ENCODE measurements at regions of chr22 and their contacts with region 1.

Region 1: GRCh38 chr22:30356449-30357235 is at the starts of genes CCDC157 and SF3A1:
- DNase-seq: peak; percentile 67 to 85
- ATAC-seq: peak; percentile 94 to 97
- H3K4me3 ChIP-seq: peak within 1 kb of the TSS; percentile 93
- H3K27ac ChIP-seq: peak within 1 kb of the TSS; percentile 95 to 99
- H3K4me1 ChIP-seq: peaks cover 18% of the 10 kb centered on the region; the same call in 1 of the 3 replicates
- CTCF ChIP-seq: no peak
- EP300 ChIP-seq: no peak
- POLR2A ChIP-seq: peak; percentile 87
- RAD21 ChIP-seq: no peak
- polyA plus RNA-seq, gene CCDC157: 1.4 and 2.1 TPM in 2 replicates
- polyA plus RNA-seq, gene SF3A1: 47.0 and 86.1 TPM in 2 replicates

Region 2: DNA sequence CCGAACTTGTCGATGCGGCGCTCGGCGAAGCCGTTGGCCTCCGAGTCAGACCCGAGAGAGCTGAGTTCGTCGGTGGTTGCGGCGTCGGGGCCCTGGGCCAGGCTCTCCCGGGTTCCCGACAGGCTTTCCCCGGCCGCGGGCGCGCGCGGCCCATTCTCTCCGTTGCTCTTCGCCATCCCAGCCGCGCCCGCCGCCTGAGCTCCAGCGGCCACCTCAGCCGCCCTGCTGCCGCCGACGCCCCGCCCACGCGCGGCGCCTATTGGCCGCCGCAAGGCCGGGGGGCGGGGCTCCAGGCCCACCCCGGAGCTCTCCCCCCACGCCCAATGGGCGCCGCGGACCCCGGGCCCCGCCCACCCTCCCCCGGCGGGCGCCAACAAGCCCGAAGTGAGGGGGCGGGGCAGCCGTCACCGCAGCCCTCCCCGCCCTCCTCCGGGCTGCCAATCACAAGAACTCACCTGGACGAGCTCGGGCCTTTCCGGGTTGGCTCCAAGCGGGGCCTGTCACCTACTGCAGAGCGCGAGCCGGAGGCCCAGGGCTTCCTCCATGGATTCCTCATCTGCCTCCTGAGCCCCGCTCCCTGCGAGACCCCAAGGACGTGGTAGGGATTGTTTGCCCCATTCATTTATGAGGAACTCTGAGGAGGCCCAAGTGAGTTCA is 29.8 kb before region 1 on chr22 and contains the start of gene TBC1D10A:
- CTCF ChIA-PET with region 1: interaction called, 4 read pairs
- POLR2A ChIA-PET with region 1: interaction called, 13 read pairs
- DNase-seq: peak; percentile 80 to 87
- ATAC-seq: peak; percentile 80 to 86
- H3K4me3 ChIP-seq: peak within 1 kb of the TSS; percentile 78
- H3K27ac ChIP-seq: peak within 1 kb of the TSS; percentile 74 to 96
- H3K4me1 ChIP-seq: peaks cover 24% of the 10 kb centered on the region
- CTCF ChIP-seq: no peak
- EP300 ChIP-seq: no peak
- POLR2A ChIP-seq: peak; percentile 20; the same call in 1 of the 2 replicates
- RAD21 ChIP-seq: no peak
- polyA plus RNA-seq, gene TBC1D10A: 5.4 and 5.8 TPM in 2 replicates

Region 3: GRCh38 chr22:30368431-30368830 is 11.8 kb after region 1 on chr22:
- CTCF ChIA-PET with region 1: interaction called, 4 read pairs
- POLR2A ChIA-PET with region 1: interaction called, 13 read pairs
- DNase-seq: no peak
- ATAC-seq: no peak
- H3K4me3 ChIP-seq: no peak overlapping the region
- H3K27ac ChIP-seq: no peak overlapping the region
- H3K4me1 ChIP-seq: no peaks in the 10 kb centered on the region
- CTCF ChIP-seq: no peak
- EP300 ChIP-seq: no peak
- POLR2A ChIP-seq: no peak
- RAD21 ChIP-seq: no peak